Posterior vena cava (tissue), 2 donors: ENCODE measurements at regions of chr12 and their contacts with region 1.

Region 1: GRCh38 chr12:120686690-120687577 is at the start of gene MLEC:
- DNase-seq: peak; percentile 100
- total RNA-seq, gene MLEC: 92.5 to 132 TPM

Region 2: DNA sequence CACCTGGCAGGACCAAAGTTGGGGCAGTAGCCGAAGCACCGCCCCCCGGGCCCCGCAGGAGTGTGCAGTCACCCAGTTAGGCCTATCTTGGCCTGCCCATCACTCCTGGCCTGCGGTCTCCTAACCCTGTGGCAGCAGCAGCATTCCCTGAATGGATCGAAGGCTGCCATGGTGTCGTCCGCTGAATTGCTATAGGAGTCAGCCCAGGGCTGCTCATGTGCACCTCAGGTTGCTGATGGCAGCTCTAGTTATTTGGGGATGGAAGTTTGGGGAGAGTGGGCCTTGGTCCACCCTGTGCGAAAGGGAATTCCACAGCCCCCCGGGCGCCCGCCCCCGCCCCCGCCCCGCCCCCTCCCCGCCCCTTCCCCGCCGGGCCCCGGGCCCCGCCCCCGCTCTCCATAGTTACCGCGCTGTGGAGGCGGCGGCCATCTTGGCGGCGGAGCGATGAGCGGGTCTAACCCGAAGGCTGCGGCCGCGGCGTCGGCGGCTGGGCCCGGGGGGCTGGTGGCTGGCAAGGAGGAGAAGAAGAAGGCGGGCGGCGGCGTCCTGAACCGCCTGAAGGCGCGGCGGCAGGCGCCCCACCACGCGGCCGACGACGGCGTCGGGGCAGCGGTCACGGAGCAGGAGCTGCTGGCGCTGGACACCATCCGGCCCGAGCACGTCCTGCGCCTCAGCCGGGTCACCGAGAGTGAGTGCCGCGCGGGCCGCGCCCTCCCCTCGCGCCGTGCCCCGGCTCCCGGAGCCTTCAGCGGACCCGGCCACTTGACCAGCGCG is 23.3 kb after region 1 on chr12 and contains the start of gene UNC119B:
- intact Hi-C with region 1: loop called in 1 of 2 experiments (anchors 2 kb)
- DNase-seq: peak; percentile 93
- total RNA-seq, gene UNC119B: 20.6 to 21.3 TPM

Region 3: GRCh38 chr12:120725659-120726509 is 39.0 kb after region 1 on chr12 and contains the start of gene ACADS:
- intact Hi-C with region 1: no loop called
- DNase-seq: peak; percentile 96
- total RNA-seq, gene ACADS: 12.3 to 15.7 TPM

Region 4: DNA sequence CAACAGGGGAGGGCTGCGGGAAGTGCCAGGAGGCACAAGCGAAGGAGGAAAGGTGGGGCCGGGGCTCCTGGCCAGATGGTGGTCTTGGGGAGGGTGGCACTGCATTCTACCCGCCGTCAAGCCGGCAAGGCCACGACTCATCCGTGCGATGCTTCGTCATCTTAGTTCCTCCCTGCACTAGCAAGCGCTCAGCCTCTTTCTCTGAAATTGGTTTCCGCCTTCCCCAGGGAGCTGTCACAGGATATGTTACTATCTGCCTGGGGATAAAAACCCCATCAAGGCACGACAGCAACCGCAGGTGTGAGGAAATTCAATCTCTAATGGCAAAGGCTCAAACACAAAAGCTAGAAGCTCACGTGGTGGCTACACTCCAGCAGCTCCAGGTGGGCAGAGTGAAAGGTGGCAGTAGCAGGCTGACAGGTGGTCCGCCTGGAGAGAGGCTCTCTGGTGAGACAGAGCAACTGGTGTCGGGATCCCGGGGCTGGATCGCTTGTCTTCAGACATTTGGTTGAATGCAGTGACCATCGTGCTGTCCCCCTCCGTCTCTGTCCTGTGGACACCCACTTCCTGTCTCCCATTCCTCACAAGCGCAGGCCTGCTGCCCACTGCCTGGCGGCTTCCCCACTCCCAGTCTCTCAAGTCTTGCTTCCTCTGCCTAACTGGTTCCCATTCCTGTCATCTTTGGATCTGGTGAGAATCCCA is 72.9 kb after region 1 on chr12:
- intact Hi-C with region 1: loop called in 1 of 2 experiments (anchors 2 kb)
- DNase-seq: no peak